ENCODE measurements at regions of chr5 and their contacts with region 1.

Region 1: DNA sequence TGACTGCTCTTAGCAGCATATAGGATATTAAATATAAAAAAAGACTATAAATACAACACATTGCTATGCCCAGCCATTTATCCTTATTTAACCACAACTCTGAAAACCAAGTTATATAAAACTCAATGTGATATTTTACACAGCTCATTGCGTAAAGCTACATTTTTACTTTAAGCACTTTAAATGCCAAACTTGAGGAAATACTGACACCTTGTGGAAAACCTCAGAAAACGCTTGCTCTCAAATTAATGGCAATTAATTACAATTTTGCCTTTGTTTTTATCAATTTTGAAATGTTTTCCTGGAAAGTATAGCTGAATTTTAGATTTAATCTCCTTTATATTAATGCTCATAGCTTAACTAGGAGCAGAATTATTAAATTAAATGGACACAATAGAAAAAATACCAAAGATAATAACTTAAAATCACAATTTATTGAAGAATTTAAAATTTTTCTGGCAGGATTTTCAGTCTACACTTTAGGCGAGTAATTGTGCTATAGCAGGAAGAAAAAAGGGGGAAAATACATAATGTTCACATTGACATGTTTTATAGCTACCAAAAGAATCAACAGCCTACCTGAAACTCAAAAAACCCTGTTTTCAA is 25.2 kb upstream of the PLAC8L1 start:
- DNase-seq: peak; percentile 28
- H3K4me3 ChIP-seq: no peak overlapping the region
- H3K27ac ChIP-seq: no peak overlapping the region
- H3K4me1 ChIP-seq: no peaks in the 10 kb centered on the region
- H3K27me3 ChIP-seq: no peaks in the 10 kb centered on the region
- CTCF ChIP-seq: peak; percentile 31 to 41
- POLR2A ChIP-seq: no peak

Region 2: GRCh38 chr5:145834917-145835847 is 295.4 kb before region 1 on chr5 and contains the start of gene PRELID2:
- CTCF ChIA-PET with region 1: no interaction called
- POLR2A ChIA-PET with region 1: no interaction called
- dilution Hi-C with region 1: no loop called
- intact Hi-C with region 1: no loop called
- DNase-seq: peak; percentile 87
- H3K4me3 ChIP-seq: peak within 1 kb of the TSS; percentile 60 to 79 (median 69)
- H3K27ac ChIP-seq: peak within 1 kb of the TSS; percentile 65
- H3K4me1 ChIP-seq: peaks cover 26% of the 10 kb centered on the region
- H3K27me3 ChIP-seq: no peaks in the 10 kb centered on the region
- CTCF ChIP-seq: no peak
- POLR2A ChIP-seq: peak; percentile 43
- total RNA-seq, gene PRELID2: 14.9 and 16.4 TPM in 2 replicates

Region 3: GRCh38 chr5:146119515-146119914 is 11.0 kb before region 1 on chr5:
- CTCF ChIA-PET with region 1: interaction called, 22 read pairs
- POLR2A ChIA-PET with region 1: interaction called, 5 read pairs
- dilution Hi-C with region 1: no loop called
- intact Hi-C with region 1: no loop called
- DNase-seq: no peak
- H3K4me3 ChIP-seq: no peak overlapping the region
- H3K27ac ChIP-seq: no peak overlapping the region
- H3K4me1 ChIP-seq: no peaks in the 10 kb centered on the region
- H3K27me3 ChIP-seq: no peaks in the 10 kb centered on the region
- CTCF ChIP-seq: no peak
- POLR2A ChIP-seq: no peak

Region 4: DNA sequence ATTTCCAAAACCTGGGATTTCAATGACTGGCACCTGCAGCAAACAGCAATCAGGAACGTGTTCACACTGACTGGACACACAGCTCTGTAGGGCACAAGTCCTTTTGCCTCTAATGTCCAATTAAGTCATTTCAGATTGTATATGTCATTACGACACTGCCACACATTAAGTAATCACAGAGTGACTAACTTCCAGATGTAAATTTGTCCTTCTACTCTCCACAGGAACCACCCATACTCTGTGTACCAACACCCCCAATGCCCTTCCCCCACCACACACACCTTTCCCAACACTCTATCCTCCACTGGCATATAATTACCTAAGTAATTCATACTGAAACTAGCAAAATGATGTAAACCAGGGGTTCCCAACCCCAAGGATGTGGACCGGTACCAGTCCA is 21.4 kb after region 1 on chr5:
- CTCF ChIA-PET with region 1: interaction called, 10 read pairs
- POLR2A ChIA-PET with region 1: no interaction called
- dilution Hi-C with region 1: no loop called
- intact Hi-C with region 1: no loop called
- DNase-seq: no peak
- H3K4me3 ChIP-seq: no peak overlapping the region
- H3K27ac ChIP-seq: no peak overlapping the region
- H3K4me1 ChIP-seq: no peaks in the 10 kb centered on the region
- H3K27me3 ChIP-seq: no peaks in the 10 kb centered on the region
- CTCF ChIP-seq: no peak
- POLR2A ChIP-seq: no peak

Measured in endothelial cell of umbilical vein (primary cell).